Transverse colon (tissue), 4 donors: ENCODE measurements at regions of chr7 and their contacts with region 1.

Region 1: GRCh38 chr7:26034391-26034790 is 117.6 kb upstream of the NFE2L3 start:
- DNase-seq: no peak
- H3K4me3 ChIP-seq: no peak overlapping the region
- H3K27ac ChIP-seq: no peak overlapping the region
- H3K4me1 ChIP-seq: no peaks in the 10 kb centered on the region
- H3K27me3 ChIP-seq: peaks cover 24% of the 10 kb centered on the region
- CTCF ChIP-seq: no peak
- EP300 ChIP-seq: no peak
- POLR2A ChIP-seq: no peak

Region 2: DNA sequence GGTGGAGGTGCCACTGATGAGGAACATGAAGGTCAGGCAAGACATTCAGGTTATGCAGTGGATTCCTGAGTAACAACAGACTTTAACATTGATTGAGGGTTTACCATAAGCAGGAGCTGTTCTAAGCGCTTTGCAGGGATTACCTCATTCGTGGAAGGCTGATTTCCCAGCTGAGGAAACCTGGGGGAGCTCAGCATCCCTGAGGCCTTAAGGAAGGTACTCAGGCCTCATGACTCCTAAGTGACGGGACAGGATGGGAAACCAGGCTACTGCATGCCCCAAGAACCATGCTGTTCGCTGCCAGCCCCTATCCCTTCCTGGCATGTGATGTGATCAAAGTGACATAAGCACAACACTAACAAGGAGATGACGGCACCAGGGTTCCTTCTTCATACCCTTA is 26.0 kb before region 1 on chr7:
- in situ Hi-C with region 1: no loop called
- intact Hi-C with region 1: loop called (anchors 1 kb)
- DNase-seq: no peak
- H3K4me3 ChIP-seq: no peak overlapping the region
- H3K27ac ChIP-seq: no peak overlapping the region
- H3K4me1 ChIP-seq: no peaks in the 10 kb centered on the region
- H3K27me3 ChIP-seq: no peaks in the 10 kb centered on the region
- CTCF ChIP-seq: no peak
- EP300 ChIP-seq: no peak
- POLR2A ChIP-seq: no peak

Region 3: GRCh38 chr7:27165089-27165995 is 1131.0 kb after region 1 on chr7 and contains the start of gene HOXA9:
- in situ Hi-C with region 1: no loop called
- intact Hi-C with region 1: no loop called
- DNase-seq: peak; percentile 87
- H3K4me3 ChIP-seq: peak within 1 kb of the TSS; percentile 58 to 82 (median 64)
- H3K27ac ChIP-seq: peak within 1 kb of the TSS; percentile 95 to 99 (median 98)
- H3K4me1 ChIP-seq: peaks cover 1 to 33% (median 24%) of the 10 kb centered on the region in 4 donors
- H3K27me3 ChIP-seq: peaks cover 27% of the 10 kb centered on the region
- CTCF ChIP-seq: peak in 4 of 5 experiments; percentile 7 to 37 (median 18)
- EP300 ChIP-seq: no peak
- POLR2A ChIP-seq: peak; percentile 77
- total RNA-seq, gene HOXA9: 19.5 to 130 (median 50.6) TPM